ENCODE measurements at regions of chr10 and their contacts with region 1.

Region 1: GRCh38 chr10:8053446-8054290 is 820 bp upstream of the GATA3 start:
- DNase-seq: peak; percentile 94
- H3K4me3 Mint-ChIP-seq: peak overlapping the region; percentile 76
- H3K27ac Mint-ChIP-seq: peak overlapping the region; percentile 77
- H3K4me1 Mint-ChIP-seq: peaks cover 43% of the 10 kb centered on the region
- H3K27me3 Mint-ChIP-seq: peaks cover 20% of the 10 kb centered on the region

Region 2: DNA sequence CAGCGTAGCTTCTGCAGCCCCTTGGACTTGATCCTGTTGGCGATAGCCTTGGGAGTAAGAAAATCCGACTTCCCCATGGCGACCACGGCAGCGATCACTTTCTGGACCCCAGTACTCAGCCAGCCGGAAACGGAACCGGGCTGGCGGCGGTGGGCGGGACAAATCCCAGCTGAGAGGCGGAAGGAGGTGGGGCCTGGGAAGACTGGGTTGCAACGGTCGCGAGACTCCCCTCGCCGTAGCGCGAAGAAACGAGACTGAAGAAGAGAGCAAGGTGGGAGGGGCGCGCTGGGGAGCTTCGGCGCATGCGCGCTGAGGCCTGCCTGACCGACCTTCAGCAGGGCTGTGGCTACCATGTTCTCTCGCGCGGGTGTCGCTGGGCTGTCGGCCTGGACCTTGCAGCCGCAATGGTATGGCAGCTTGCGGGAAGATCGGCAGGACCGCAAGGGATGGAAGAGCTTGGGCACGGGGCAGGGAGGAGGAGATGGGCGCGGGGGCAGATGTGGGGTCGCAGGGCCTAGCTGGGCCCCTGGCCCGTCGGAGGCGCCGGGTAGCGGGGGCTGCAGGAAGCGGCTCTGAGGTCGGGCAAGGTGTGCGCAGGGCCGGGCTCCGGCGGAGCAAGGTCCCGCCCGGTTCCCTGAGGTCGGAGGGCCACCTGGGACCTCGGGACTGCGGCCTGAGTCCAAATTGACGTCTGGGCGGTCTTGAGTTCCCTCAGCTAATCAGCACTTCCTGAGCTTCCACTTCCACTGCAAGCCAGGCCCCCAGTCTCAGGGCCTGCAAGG is 265.6 kb before region 1 on chr10 and contains the starts of genes ATP5F1C and KIN:
- CTCF ChIA-PET with region 1: no interaction called
- intact Hi-C with region 1: loop called (anchors 1 kb)
- DNase-seq: peak; percentile 98
- H3K4me3 Mint-ChIP-seq: no peak within 1 kb of the TSS
- H3K27ac Mint-ChIP-seq: no peak within 1 kb of the TSS
- H3K4me1 Mint-ChIP-seq: peaks cover 63% of the 10 kb centered on the region
- H3K27me3 Mint-ChIP-seq: no peaks in the 10 kb centered on the region
- total RNA-seq, gene ATP5F1C: 287 to 290 TPM
- total RNA-seq, gene KIN: 6.4 to 7.7 TPM

Region 3: GRCh38 chr10:8037941-8038894 is 15.4 kb before region 1 on chr10:
- CTCF ChIA-PET with region 1: interaction called, 5 read pairs
- intact Hi-C with region 1: loop called (anchors 2 kb)
- DNase-seq: no peak
- H3K4me3 Mint-ChIP-seq: no peak overlapping the region
- H3K27ac Mint-ChIP-seq: no peak overlapping the region
- H3K4me1 Mint-ChIP-seq: peaks cover 39% of the 10 kb centered on the region
- H3K27me3 Mint-ChIP-seq: peaks cover 85% of the 10 kb centered on the region

Region 4: GRCh38 chr10:8444630-8445029 is 391.0 kb after region 1 on chr10:
- CTCF ChIA-PET with region 1: no interaction called
- intact Hi-C with region 1: loop called (anchors 1 kb)
- DNase-seq: peak; percentile 61
- H3K4me3 Mint-ChIP-seq: no peak overlapping the region
- H3K27ac Mint-ChIP-seq: no peak overlapping the region
- H3K4me1 Mint-ChIP-seq: peaks cover 9% of the 10 kb centered on the region
- H3K27me3 Mint-ChIP-seq: no peaks in the 10 kb centered on the region

Region 5: DNA sequence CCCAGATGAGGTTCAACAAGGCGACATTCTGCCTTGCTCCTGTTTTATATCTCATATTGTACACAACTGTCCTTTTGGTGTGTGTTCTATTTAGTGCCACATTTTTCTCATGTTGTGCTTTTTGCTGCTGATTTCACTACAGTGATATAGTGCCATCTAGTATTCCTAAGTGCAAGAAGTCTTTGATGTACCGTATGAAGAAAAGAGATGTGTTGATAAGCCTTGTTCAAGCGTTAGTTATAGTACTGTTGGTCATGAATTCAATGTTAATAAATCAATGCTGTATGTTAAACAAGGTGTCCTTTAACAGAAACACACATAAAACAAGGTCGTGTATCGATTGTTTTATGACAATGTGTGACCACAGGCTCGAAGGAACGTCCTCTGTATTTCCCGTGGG is 940.2 kb after region 1 on chr10:
- CTCF ChIA-PET with region 1: no interaction called
- intact Hi-C with region 1: no loop called
- DNase-seq: no peak
- H3K4me3 Mint-ChIP-seq: no peak overlapping the region
- H3K27ac Mint-ChIP-seq: no peak overlapping the region
- H3K4me1 Mint-ChIP-seq: peaks cover 19% of the 10 kb centered on the region
- H3K27me3 Mint-ChIP-seq: no peaks in the 10 kb centered on the region

Region 6: DNA sequence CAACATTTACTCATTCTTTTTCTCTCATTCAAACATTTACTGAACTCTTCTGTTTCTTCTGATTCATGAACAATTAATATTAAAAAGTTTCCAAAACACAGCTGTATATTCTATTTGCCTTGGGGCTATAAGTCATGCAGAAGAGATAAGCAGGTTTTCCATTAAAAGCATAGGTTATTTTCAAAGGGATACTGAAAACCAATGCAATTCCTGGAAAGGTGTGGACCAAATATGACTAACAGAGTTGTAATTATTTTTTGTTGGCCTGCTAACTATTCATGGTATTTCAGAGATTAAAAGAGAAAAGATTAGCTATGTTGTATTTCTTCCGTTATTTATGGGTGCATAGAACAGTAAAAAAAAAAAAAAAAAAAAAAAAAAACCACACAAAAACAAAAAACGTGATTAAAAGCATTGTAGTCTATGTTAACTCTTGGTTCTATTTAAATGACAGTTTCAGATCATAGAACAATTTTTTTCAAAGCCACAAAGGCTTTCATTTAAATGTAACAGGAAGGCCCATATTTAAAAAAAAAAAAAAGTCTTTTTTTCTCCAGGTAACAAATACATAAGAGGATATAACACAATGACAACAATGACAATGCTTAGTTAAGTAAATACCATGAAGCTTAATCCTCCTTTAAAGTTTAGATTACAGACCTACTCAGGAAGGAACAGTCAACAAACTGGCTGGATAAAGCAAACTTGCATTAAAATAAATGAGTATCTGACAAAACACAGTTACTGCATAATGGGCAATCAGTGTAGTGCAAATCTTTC is 1043.7 kb after region 1 on chr10:
- CTCF ChIA-PET with region 1: no interaction called
- intact Hi-C with region 1: loop called (anchors 5 kb)
- DNase-seq: no peak
- H3K4me3 Mint-ChIP-seq: no peak overlapping the region
- H3K27ac Mint-ChIP-seq: no peak overlapping the region
- H3K4me1 Mint-ChIP-seq: peaks cover 28% of the 10 kb centered on the region
- H3K27me3 Mint-ChIP-seq: no peaks in the 10 kb centered on the region